Tibial artery (tissue), 4 donors: ENCODE measurements at regions of chr12 and their contacts with region 1.

Region 1: DNA sequence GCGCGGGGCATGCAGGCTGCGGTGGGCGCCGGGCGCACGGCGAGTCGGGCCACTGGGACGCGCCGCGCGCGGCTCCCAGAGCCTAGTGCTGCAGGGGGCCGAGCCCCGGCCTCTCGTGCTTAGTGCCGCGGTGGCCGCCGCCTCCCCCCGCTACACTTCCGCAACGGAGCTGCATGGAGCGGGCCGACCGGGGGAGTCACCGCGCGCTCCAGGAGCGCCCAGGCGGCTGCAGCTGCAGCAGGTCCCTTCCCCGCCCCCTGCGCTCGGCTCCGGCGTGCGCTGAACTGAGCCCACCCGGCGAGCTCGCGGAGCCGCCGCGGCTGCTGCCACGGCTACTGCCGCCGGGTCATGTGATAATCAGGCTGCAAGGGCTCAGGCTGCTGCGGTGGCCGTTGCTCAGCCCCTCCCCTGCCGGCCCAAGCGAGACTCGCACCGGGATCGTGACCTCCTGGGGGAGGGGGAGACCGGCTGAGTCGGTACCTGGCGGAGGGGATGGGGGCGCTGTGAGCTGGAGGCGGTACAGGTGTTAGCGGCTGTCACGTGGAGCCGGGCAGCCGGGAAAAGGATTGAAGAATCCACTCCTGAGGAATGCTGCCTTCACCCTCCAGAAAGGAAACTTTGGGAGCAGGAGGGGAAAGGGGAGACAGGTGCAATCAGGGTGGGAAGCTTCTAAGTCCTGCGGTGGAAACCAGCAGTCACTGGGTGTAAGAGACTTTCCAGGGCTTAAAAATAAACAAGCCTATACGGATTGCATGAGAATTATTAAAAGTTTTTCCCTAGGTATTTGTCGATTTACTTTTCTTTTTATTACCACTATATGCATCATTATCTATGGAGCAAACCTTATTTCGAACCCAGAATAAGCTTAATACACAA is at the start of gene PPM1H:
- DNase-seq: peak; percentile 44 to 77
- H3K4me3 ChIP-seq: peak within 1 kb of the TSS; percentile 77 to 94
- H3K27ac ChIP-seq: peak within 1 kb of the TSS; percentile 73 to 85
- H3K4me1 ChIP-seq: peaks cover 0 to 11% (median 7%) of the 10 kb centered on the region in 4 donors
- H3K27me3 ChIP-seq: no peaks in the 10 kb centered on the region
- CTCF ChIP-seq: peak; percentile 32 to 44

Region 2: GRCh38 chr12:62817556-62818271 is 117.3 kb before region 1 on chr12:
- intact Hi-C with region 1: loop called (anchors 5 kb)
- DNase-seq: no peak
- H3K4me3 ChIP-seq: peak overlapping the region; percentile 7 to 19
- H3K27ac ChIP-seq: peak overlapping the region in 1 of 2 donors; percentile 41
- H3K4me1 ChIP-seq: peaks cover 0 to 19% (median 2%) of the 10 kb centered on the region in 4 donors
- H3K27me3 ChIP-seq: no peaks in the 10 kb centered on the region
- CTCF ChIP-seq: no peak

Region 3: DNA sequence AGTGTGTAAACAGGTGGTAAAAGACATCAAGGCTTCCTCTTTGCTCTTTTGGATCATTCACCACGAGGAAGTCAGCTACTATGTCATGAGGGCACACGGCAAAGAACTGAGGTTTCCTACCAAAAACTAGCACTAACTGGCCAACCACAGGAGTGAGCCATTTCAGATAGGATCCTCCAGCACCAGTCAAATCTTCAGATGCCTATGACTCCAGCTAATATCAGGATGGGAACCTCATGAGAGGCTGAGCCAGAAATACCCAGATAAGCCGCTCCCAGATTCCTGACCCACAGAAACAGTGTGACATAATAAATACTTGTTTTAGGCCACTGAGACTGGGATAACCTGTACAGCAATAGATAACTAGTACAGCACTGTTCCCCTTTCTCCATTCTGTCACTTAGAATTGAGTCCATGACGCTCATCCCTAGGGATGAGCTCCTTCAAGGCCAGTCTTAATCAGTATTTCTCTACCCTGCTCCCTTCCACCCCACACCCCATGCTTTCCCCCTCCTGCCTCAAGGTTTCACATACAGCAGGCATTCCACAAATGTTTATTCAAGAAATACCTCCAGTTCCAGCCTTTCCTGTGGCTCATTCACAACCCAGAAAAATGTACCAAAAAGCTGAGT is 68.5 kb before region 1 on chr12:
- intact Hi-C with region 1: loop called (anchors 10 kb)
- DNase-seq: no peak
- H3K4me3 ChIP-seq: no peak overlapping the region
- H3K27ac ChIP-seq: peak overlapping the region; percentile 64 to 66
- H3K4me1 ChIP-seq: peaks cover 0 to 57% (median 23%) of the 10 kb centered on the region in 4 donors
- H3K27me3 ChIP-seq: no peaks in the 10 kb centered on the region
- CTCF ChIP-seq: no peak

Region 4: GRCh38 chr12:62891805-62892549 is 43.1 kb before region 1 on chr12:
- intact Hi-C with region 1: no loop called
- DNase-seq: no peak
- H3K4me3 ChIP-seq: no peak overlapping the region
- H3K27ac ChIP-seq: no peak overlapping the region
- H3K4me1 ChIP-seq: peaks cover 0 to 15% (median 0%) of the 10 kb centered on the region in 4 donors
- H3K27me3 ChIP-seq: no peaks in the 10 kb centered on the region
- CTCF ChIP-seq: no peak

Region 5: GRCh38 chr12:63021116-63021515 is 86.1 kb after region 1 on chr12:
- intact Hi-C with region 1: no loop called
- DNase-seq: no peak
- H3K4me3 ChIP-seq: no peak overlapping the region
- H3K27ac ChIP-seq: no peak overlapping the region
- H3K4me1 ChIP-seq: no peaks in the 10 kb centered on the region
- H3K27me3 ChIP-seq: no peaks in the 10 kb centered on the region
- CTCF ChIP-seq: no peak